PC-9 (cell line): ENCODE measurements at regions of chr16 and their contacts with region 1.

Region 1: DNA sequence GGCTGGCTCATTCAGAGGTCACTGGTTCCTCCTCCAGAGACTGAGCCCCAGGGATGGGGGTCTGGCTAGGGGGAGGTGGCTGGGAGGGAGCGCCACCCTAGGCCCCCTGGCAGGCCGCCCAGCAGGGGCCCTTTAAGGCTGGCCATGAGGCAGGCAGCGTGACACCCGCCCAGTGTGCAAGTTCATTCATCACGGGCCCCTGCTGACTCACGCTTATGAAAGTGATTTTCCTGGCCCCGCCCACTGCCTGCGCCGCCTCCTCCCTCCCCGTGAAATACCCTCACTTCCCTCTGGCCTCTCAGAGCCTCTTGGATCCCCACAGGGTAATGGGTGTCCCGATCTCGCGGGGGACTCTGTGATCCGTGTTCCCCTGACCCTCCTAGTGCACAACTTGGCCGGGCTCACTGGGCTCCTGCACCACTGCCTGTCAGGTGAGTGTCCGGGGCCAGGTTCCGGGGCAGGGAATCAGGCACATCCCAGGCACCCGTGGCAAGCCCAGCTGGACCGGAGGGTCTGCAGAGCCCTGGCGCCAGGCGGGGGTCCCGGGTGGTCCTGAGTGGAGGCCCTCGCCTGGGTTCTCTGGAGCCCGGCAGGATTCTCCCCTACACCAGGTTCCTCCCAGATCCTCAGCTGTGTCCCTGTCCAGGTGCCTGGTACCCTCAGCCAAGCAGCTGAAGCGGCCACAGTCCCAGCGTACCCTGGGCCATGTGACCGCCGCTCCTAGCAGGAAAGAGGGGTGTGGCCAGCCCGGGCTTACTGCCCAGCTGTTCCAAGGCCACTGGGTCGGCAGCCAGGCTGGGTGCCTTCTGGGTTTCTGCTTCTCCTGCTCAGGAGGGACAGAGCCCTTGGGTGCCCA is at the start of gene OSGIN1:
- DNase-seq: peak; percentile 82 to 93
- H3K4me3 ChIP-seq: peak within 1 kb of the TSS; percentile 87
- H3K27ac ChIP-seq: peak within 1 kb of the TSS; percentile 91
- H3K4me1 ChIP-seq: peaks cover 22% of the 10 kb centered on the region
- H3K27me3 ChIP-seq: no peaks in the 10 kb centered on the region
- CTCF ChIP-seq: no peak
- total RNA-seq, gene OSGIN1: 41.3 and 44.8 TPM in 2 replicates

Region 2: DNA sequence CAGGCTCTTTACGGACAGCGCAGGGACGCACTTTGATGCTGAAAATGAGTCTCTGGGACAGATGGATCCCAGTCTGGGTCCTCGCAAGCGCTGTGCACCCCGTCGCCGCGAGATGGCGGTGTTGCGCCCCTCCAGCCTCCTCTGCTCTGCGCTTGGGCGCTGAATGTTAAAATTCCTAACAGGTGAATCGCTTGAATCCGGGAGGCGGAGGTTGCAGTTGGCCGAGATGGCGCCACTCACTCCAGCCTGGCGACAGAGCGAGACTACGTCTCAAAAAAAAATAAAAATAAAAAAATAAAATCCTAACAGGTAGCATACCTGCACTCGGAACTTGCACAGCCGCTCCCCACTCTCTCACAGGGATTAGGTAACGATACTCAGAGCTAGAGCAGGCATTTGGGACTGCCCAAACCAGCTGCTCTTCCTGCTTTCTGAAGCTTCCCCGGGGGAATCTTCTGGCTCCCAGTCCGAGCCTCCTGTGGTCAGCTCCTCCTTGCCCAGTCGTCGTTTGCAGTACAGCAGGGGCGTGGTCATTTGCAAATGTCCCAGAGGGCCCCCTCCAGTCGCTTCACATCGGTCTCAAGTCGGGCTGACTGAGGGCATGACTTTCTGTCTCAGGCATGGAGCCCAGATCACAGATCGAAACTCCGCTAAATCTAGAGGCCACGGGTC is 26.3 kb before region 1 on chr16:
- CTCF ChIA-PET with region 1: interaction called, 5 read pairs
- POLR2A ChIA-PET with region 1: interaction called, 12 read pairs
- intact Hi-C with region 1: loop called (anchors 1 kb)
- DNase-seq: peak; percentile 89 to 92
- H3K4me3 ChIP-seq: peak overlapping the region; percentile 53
- H3K27ac ChIP-seq: peak overlapping the region; percentile 94
- H3K4me1 ChIP-seq: peaks cover 25% of the 10 kb centered on the region
- H3K27me3 ChIP-seq: no peaks in the 10 kb centered on the region
- CTCF ChIP-seq: peak; percentile 86

Region 3: GRCh38 chr16:84044118-84044488 is 90.9 kb after region 1 on chr16:
- CTCF ChIA-PET with region 1: interaction called, 3 read pairs
- POLR2A ChIA-PET with region 1: no interaction called
- intact Hi-C with region 1: loop called (anchors 5 kb)
- DNase-seq: no peak
- H3K4me3 ChIP-seq: no peak overlapping the region
- H3K27ac ChIP-seq: no peak overlapping the region
- H3K4me1 ChIP-seq: no peaks in the 10 kb centered on the region
- H3K27me3 ChIP-seq: peaks cover 28% of the 10 kb centered on the region
- CTCF ChIP-seq: peak; percentile 53; the same call in 1 of the 2 replicates

Region 4: DNA sequence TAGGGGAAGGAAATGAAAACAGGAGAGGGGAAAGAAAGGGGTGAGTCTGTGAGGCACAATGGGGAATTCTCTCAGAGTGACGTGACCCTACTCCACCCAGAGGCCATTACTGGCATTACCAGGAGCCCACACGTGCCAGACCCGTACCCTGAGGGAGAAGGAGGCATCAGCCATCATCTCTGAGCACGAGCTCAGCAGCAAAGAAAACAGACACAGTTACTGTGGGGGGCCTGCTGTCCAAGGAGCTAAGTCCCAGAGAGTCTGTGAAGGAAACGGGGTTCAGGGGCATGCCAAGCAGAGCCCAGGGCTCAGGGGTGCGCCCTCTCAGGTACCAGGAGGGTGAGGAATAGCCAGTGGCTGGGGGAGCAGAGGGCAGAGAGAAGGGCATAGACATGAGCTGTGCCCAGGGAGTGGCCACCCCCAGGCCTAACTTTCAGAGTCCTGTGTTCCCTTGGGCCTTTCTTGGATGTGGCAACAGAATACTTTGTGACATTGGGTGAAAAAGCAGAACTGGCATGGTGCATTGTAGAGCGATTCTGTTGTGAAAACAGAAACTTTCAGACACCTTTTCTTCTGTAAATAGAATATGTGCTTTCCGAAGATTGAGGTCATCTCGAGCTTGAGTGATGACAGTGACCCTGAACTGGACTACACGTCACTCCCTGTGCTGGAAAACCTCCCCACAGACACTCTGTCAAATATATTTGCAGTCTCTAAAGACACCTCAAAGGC is 222.3 kb after region 1 on chr16:
- CTCF ChIA-PET with region 1: no interaction called
- POLR2A ChIA-PET with region 1: no interaction called
- intact Hi-C with region 1: loop called (anchors 5 kb)
- DNase-seq: peak; percentile 57 to 74
- H3K4me3 ChIP-seq: no peak overlapping the region
- H3K27ac ChIP-seq: no peak overlapping the region
- H3K4me1 ChIP-seq: peaks cover 33% of the 10 kb centered on the region
- H3K27me3 ChIP-seq: no peaks in the 10 kb centered on the region
- CTCF ChIP-seq: peak; percentile 87